ENCODE measurements at regions of chr22 and their contacts with region 1.

Region 1: DNA sequence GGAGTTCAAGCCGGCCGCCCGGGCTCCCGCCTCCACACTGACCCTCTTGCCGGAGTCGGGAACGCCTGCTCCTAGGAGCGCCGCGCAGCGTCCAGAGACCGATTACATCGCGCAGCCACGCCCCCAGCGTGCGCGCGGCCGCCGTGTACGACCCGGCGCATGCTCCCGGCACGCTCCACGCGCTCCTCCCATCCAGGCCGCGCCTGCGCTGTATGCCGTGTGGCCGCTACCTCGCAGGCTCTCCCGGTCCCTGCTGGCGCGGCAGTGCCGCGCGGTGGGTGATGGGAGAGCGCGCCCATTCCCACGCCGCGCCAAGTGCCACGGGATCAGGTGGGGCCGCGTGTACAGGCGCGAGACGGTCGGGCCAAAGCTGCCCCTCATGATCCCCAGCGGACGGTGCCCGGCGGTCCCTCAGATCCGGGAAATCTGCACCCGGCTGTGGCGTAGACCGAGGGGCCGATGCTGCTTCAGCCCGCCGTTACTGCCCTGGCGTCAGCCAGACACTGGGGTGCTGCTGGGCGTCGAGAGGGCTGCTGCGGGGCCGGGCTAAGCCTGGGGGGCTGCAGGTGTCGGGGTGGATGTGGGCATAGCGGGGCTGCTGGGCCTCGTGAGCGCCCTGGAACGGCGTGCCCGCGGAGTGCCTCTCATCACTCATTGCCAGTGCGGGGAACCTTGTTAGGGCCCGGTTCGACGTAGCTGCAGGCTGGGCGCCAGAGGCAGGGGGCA is at the starts of genes GNB1L and RTL10:
- DNase-seq: peak; percentile 98
- CTCF ChIP-seq: no peak

Region 2: GRCh38 chr22:19970479-19971275 is 115.7 kb after region 1 on chr22:
- in situ Hi-C with region 1: loop called (anchors 25 kb)
- DNase-seq: peak; percentile 92
- CTCF ChIP-seq: peak; percentile 98